PC-9 (cell line): ENCODE measurements at regions of chr5 and their contacts with region 1.

Region 1: GRCh38 chr5:337563-338130 is 16.1 kb downstream of the AHRR start:
- DNase-seq: no peak
- H3K4me3 ChIP-seq: no peak overlapping the region
- H3K27ac ChIP-seq: no peak overlapping the region
- H3K4me1 ChIP-seq: no peaks in the 10 kb centered on the region
- H3K27me3 ChIP-seq: no peaks in the 10 kb centered on the region
- CTCF ChIP-seq: peak; percentile 61

Region 2: GRCh38 chr5:106587-106986 is 231.1 kb before region 1 on chr5:
- CTCF ChIA-PET with region 1: no interaction called
- POLR2A ChIA-PET with region 1: no interaction called
- intact Hi-C with region 1: no loop called
- DNase-seq: no peak
- H3K4me3 ChIP-seq: no peak overlapping the region
- H3K27ac ChIP-seq: no peak overlapping the region
- H3K4me1 ChIP-seq: no peaks in the 10 kb centered on the region
- H3K27me3 ChIP-seq: peaks cover 72% of the 10 kb centered on the region
- CTCF ChIP-seq: no peak

Region 3: DNA sequence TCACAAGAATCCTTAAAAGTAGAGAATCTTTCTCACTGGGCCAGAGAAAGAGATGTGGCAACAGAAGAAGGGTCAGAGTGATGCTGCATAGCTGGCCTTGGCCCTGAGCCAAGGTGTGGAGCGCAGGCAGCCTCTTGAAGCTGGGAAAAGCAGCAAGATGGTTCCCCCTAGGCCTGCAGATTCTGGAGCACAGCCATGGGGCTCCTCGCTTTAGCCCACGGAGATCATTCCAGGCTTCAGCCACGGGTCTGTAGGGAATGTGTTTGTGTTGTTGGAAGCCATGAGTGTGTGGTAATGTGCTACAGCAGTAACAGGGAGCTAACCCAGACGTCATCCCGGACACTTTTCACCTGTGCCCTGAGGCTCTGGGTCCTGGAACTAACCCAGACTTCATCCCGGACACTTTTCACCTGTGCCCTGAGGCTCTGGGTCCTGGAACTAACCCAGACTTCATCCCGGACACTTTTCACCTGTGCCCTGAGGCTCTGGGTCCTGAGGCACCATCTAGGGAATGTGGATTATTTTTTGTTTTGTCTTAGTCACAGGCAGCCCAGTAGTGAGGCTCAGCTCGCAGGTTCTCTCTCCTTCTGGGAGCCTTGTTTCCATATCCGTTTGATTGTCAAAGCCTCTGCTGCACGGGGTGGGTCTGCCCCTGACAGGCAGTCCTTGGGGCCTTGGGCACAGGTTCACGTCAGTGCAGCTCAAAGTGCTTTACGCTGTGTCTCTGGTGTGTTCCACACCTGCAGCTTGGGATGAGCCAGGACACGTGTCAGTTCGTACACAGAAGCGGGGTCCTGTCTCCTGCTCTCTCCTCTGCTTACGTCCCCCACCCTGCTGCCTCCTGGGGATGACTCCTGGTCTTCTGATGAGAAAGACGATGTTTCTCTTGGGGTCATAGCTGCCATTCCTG is 49.0 kb after region 1 on chr5:
- CTCF ChIA-PET with region 1: interaction called, 11 read pairs
- POLR2A ChIA-PET with region 1: no interaction called
- intact Hi-C with region 1: no loop called
- DNase-seq: peak; percentile 87 to 96
- H3K4me3 ChIP-seq: no peak overlapping the region
- H3K27ac ChIP-seq: no peak overlapping the region
- H3K4me1 ChIP-seq: peaks cover 26% of the 10 kb centered on the region
- H3K27me3 ChIP-seq: no peaks in the 10 kb centered on the region
- CTCF ChIP-seq: no peak

Region 4: DNA sequence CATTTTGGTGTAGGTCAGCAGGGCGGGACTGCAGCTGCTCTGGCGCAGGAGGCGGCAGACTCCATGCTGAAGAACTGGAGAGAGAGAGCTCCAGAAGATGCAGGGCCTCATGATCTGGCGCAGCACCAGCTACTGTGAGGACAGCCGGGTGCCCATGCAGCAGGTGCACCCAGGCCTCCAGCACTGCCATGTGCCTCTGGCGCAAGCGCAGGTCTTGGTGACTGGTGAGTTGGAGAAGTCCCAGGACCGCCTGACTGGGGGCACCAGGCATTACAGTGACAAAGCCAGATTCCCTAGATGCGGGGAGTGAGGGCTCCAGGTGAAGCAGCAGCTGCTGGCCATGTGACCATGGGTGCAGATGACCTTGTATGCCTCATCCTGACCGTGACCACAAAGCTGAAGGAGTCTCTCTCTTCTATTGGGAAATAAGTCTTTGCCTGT is 81.1 kb after region 1 on chr5:
- CTCF ChIA-PET with region 1: interaction called, 10 read pairs
- POLR2A ChIA-PET with region 1: no interaction called
- intact Hi-C with region 1: no loop called
- DNase-seq: no peak
- H3K4me3 ChIP-seq: no peak overlapping the region
- H3K27ac ChIP-seq: no peak overlapping the region
- H3K4me1 ChIP-seq: no peaks in the 10 kb centered on the region
- H3K27me3 ChIP-seq: no peaks in the 10 kb centered on the region
- CTCF ChIP-seq: no peak

Region 5: GRCh38 chr5:493119-493701 is 155.6 kb after region 1 on chr5:
- CTCF ChIA-PET with region 1: no interaction called
- POLR2A ChIA-PET with region 1: no interaction called
- intact Hi-C with region 1: no loop called
- DNase-seq: no peak
- H3K4me3 ChIP-seq: no peak overlapping the region
- H3K27ac ChIP-seq: no peak overlapping the region
- H3K4me1 ChIP-seq: no peaks in the 10 kb centered on the region
- H3K27me3 ChIP-seq: peaks cover 71% of the 10 kb centered on the region
- CTCF ChIP-seq: no peak